ENCODE measurements at regions of chr3 and their contacts with region 1.

Region 1: GRCh38 chr3:157159762-157160657 is at the start of gene CCNL1:
- DNase-seq: peak; percentile 97
- H3K4me3 Mint-ChIP-seq: peak within 1 kb of the TSS; percentile 97
- H3K27ac Mint-ChIP-seq: peak within 1 kb of the TSS; percentile 100
- H3K4me1 Mint-ChIP-seq: peaks cover 19% of the 10 kb centered on the region
- H3K27me3 Mint-ChIP-seq: no peaks in the 10 kb centered on the region
- CTCF ChIP-seq: no peak
- total RNA-seq, gene CCNL1: 103 and 112 TPM in 2 replicates

Region 2: DNA sequence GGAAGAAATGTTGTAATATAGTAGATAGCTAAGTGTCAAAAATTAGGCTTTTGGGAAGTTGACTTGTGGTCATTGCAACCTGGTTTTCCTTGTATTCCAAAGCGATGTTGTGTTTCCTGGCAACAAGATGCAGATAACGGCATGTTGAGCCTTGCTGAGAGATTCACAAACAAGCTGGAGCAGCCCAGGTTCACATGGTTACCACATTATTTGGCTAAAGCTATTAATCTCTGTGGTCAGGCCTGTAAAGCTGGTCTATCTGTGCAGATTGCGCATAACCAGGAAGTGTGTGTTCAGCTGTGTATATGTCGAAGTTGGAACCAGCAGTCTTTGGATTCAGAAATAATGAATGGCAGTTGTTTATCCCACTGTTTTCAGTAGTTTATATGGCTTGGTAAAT is 479.0 kb before region 1 on chr3:
- CTCF ChIA-PET with region 1: no interaction called
- POLR2A ChIA-PET with region 1: interaction called, 56 read pairs
- intact Hi-C with region 1: no loop called
- DNase-seq: peak; percentile 90
- H3K4me3 Mint-ChIP-seq: peak overlapping the region; percentile 43
- H3K27ac Mint-ChIP-seq: peak overlapping the region; percentile 91
- H3K4me1 Mint-ChIP-seq: peaks cover 56% of the 10 kb centered on the region
- H3K27me3 Mint-ChIP-seq: no peaks in the 10 kb centered on the region
- CTCF ChIP-seq: no peak

Region 3: GRCh38 chr3:157088601-157089454 is 71.2 kb before region 1 on chr3:
- CTCF ChIA-PET with region 1: no interaction called
- POLR2A ChIA-PET with region 1: interaction called, 39 read pairs
- intact Hi-C with region 1: no loop called
- DNase-seq: peak; percentile 87
- H3K4me3 Mint-ChIP-seq: peak overlapping the region; percentile 77
- H3K27ac Mint-ChIP-seq: peak overlapping the region; percentile 79
- H3K4me1 Mint-ChIP-seq: peaks cover 28% of the 10 kb centered on the region
- H3K27me3 Mint-ChIP-seq: no peaks in the 10 kb centered on the region
- CTCF ChIP-seq: no peak

Region 4: DNA sequence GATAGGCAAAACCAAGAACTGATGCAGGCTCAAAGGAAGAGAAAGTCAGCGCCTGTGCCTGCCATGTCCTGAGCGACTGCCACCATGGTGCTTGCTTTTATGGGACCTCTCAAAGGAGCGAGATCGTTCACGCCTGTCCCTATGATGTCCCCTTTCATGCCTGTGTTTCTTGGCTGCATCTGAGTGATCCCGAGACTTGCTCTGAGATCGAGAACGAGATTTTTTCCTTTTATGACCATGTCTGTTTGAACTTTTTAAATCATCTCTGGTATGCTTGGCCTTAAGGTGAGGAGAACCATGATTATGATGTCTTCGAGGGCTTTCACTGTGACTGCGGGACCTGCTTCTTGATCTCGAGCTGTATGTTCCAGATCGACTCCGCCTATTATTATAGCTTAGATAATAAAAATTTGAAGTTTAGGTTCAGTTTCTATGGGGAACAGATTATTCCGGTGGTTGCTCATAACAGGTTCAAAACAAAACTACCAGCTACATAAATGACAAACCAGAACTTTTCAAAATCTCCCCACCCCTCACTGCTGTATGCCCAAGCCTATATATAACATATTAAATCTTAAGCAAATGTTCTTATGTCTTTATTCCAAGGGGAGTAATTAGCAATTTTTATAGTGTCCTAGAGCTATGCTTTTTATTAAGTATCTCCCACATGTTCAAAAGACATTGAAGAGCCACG is 11.7 kb before region 1 on chr3:
- CTCF ChIA-PET with region 1: no interaction called
- POLR2A ChIA-PET with region 1: interaction called, 33 read pairs
- intact Hi-C with region 1: no loop called
- DNase-seq: no peak
- H3K4me3 Mint-ChIP-seq: no peak overlapping the region
- H3K27ac Mint-ChIP-seq: no peak overlapping the region
- H3K4me1 Mint-ChIP-seq: peaks cover 4% of the 10 kb centered on the region
- H3K27me3 Mint-ChIP-seq: no peaks in the 10 kb centered on the region
- CTCF ChIP-seq: no peak

Region 5: DNA sequence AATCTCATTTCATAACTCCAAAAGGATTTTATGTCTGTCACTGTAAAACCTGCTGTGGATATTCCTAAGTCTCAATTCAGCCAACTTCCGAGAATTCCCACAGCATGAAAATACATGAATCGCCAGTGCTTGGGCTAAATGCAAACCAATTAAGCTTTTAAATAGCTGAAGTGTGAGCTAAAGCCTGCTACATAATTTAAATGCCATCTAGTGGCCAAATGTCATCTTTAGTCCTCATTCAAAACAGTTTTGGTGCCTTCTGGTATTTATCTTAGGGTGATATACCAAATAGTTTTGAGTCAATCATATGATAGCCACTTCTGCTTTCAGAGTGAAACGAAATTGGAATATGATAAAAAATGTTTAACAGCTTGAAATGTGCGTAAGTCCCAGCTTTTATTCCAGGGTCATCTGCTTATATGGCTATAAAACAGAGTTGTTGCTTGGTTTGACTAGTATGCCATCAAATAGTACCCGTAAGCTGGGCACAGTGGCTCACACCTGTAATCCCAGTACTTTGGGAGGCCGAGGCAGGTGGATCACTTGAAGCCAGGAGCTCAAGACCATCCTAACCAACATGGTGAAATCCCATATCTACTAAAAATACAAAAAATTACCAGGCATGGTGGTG is 41.8 kb after region 1 on chr3:
- CTCF ChIA-PET with region 1: interaction called, 38 read pairs
- POLR2A ChIA-PET with region 1: interaction called, 26 read pairs
- intact Hi-C with region 1: loop called (anchors 1 kb)
- DNase-seq: peak; percentile 52
- H3K4me3 Mint-ChIP-seq: no peak overlapping the region
- H3K27ac Mint-ChIP-seq: no peak overlapping the region
- H3K4me1 Mint-ChIP-seq: no peaks in the 10 kb centered on the region
- H3K27me3 Mint-ChIP-seq: no peaks in the 10 kb centered on the region
- CTCF ChIP-seq: peak; percentile 45

Region 6: GRCh38 chr3:157447026-157447694 is 287.1 kb after region 1 on chr3:
- CTCF ChIA-PET with region 1: no interaction called
- POLR2A ChIA-PET with region 1: interaction called, 8 read pairs
- intact Hi-C with region 1: loop called (anchors 5 kb)
- DNase-seq: peak; percentile 53
- H3K4me3 Mint-ChIP-seq: no peak overlapping the region
- H3K27ac Mint-ChIP-seq: no peak overlapping the region
- H3K4me1 Mint-ChIP-seq: peaks cover 17% of the 10 kb centered on the region
- H3K27me3 Mint-ChIP-seq: no peaks in the 10 kb centered on the region
- CTCF ChIP-seq: peak; percentile 65

Measured in MCF 10A (cell line).